CD4-positive, alpha-beta memory T cell (primary cell): ENCODE measurements at regions of chr15 and their contacts with region 1.

Region 1: DNA sequence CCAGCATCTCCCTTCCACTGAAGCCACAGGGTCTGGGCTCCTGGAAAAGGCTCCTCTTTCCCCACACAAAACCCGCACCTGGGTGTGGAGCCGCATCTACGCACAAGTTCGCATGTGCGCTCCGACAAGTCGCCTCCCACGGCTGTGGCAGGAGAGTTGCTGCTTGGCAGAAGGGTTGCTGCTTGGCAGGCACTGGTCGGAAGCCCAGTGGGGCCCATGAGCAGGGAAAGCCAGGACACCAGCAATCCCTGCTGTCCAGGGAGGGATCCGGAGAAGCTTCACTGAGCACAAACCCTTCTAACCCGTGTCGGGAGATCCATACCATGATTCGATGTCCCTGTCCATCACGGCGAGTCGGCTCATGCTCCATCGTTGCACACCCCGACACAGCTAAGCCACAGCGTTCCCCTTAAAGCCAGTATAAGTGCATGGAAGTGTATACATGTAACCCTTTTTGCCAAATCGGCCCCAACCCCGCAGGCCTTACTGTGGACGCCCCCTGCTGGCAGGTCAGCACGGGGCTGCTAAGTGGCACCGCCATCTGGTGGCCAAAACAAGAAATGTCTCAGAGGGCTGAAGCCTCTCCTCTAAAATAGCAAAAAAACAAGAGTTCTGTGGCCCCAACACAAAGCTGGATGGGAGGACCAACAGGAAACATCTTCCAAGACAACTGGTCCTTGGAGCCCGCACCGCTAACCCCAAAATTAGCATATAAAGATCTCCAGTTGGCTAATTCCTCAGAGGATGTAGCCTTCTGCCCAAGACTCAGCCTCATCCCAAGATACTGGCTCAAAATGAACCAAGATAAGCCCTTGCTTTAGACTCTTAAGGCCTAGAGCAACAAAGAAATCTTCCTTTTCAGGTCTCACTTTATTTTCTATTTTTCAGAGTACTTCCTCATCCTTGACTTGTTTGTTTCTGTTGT is 8.3 kb downstream of the ANKRD63 start:
- DNase-seq: peak; percentile 81 to 88 (median 84)
- H3K4me3 ChIP-seq: no peak overlapping the region
- H3K4me3 Mint-ChIP-seq: no peak overlapping the region
- H3K27ac ChIP-seq: no peak overlapping the region
- H3K27ac Mint-ChIP-seq: peak overlapping the region in 3 of 7 donors; percentile 24 to 54 (median 32)
- H3K4me1 ChIP-seq: peaks cover 5% of the 10 kb centered on the region
- H3K4me1 Mint-ChIP-seq: peaks cover 2 to 11% (median 5%) of the 10 kb centered on the region in 4 donors
- H3K27me3 ChIP-seq: no peaks in the 10 kb centered on the region
- H3K27me3 Mint-ChIP-seq: peaks cover 3 to 18% of the 10 kb centered on the region in 2 donors

Region 2: DNA sequence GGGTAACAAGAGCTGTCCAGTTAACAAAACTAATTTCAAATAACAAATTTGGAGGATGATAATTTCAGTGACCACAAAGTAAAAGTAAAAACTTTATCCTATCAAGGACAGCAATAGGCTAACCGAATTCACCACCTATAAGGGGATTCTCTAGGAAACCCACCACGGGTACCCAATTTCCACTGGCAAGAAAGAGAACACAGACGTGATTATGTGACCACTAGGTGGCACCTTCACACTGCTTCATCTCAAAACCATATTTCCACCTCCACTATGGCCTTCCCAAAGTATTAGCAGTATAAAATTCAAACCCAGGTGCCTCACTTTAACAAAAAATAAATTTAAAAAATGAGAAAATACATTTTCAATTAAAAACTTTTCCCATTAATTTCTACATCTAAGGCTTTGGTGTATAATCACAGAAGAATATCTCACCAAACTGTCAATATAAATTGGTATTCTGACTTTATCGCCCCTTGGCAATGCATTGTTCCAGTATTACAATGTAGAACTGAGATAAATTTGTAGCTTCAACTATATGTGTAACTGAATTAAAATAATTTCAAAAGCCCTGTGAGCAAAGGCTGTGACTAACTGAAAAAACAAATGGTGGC is 588.5 kb before region 1 on chr15:
- CTCF ChIA-PET with region 1: no interaction called
- POLR2A ChIA-PET with region 1: no interaction called
- intact Hi-C with region 1: loop called (anchors 1 kb)
- DNase-seq: peak in 4 of 5 donors; percentile 28 to 36 (median 31)
- H3K4me3 ChIP-seq: no peak overlapping the region
- H3K4me3 Mint-ChIP-seq: no peak overlapping the region
- H3K27ac ChIP-seq: no peak overlapping the region
- H3K27ac Mint-ChIP-seq: no peak overlapping the region
- H3K4me1 ChIP-seq: no peaks in the 10 kb centered on the region
- H3K4me1 Mint-ChIP-seq: peaks cover 0 to 15% (median 4%) of the 10 kb centered on the region in 4 donors
- H3K27me3 ChIP-seq: no peaks in the 10 kb centered on the region
- H3K27me3 Mint-ChIP-seq: peaks cover 0 to 1% of the 10 kb centered on the region in 2 donors

Region 3: GRCh38 chr15:40038638-40039543 is 235.7 kb before region 1 on chr15 and contains the start of gene SRP14:
- CTCF ChIA-PET with region 1: interaction called, 42 read pairs
- POLR2A ChIA-PET with region 1: interaction called, 3 read pairs
- intact Hi-C with region 1: no loop called
- DNase-seq: peak; percentile 89 to 95 (median 90)
- H3K4me3 ChIP-seq: peak within 1 kb of the TSS; percentile 42 to 97
- H3K4me3 Mint-ChIP-seq: peak within 1 kb of the TSS; percentile 96 to 100 (median 99)
- H3K27ac ChIP-seq: peak within 1 kb of the TSS; percentile 98
- H3K27ac Mint-ChIP-seq: peak within 1 kb of the TSS; percentile 87 to 99 (median 98)
- H3K4me1 ChIP-seq: peaks cover 24% of the 10 kb centered on the region
- H3K4me1 Mint-ChIP-seq: peaks cover 22 to 49% (median 33%) of the 10 kb centered on the region in 4 donors
- H3K27me3 ChIP-seq: no peaks in the 10 kb centered on the region
- H3K27me3 Mint-ChIP-seq: no peaks in the 10 kb centered on the region
- total RNA-seq, gene SRP14: 118 to 120 TPM

Region 4: GRCh38 chr15:40217159-40217824 is 57.3 kb before region 1 on chr15:
- CTCF ChIA-PET with region 1: interaction called, 331 read pairs
- POLR2A ChIA-PET with region 1: interaction called, 10 read pairs
- intact Hi-C with region 1: loop called (anchors 1 kb)
- DNase-seq: peak; percentile 56 to 74 (median 69)
- H3K4me3 ChIP-seq: no peak overlapping the region
- H3K4me3 Mint-ChIP-seq: no peak overlapping the region
- H3K27ac ChIP-seq: no peak overlapping the region
- H3K27ac Mint-ChIP-seq: no peak overlapping the region
- H3K4me1 ChIP-seq: no peaks in the 10 kb centered on the region
- H3K4me1 Mint-ChIP-seq: no peaks in the 10 kb centered on the region
- H3K27me3 ChIP-seq: no peaks in the 10 kb centered on the region
- H3K27me3 Mint-ChIP-seq: no peaks in the 10 kb centered on the region

Region 5: GRCh38 chr15:40263024-40263754 is 11.4 kb before region 1 on chr15:
- CTCF ChIA-PET with region 1: interaction called, 30 read pairs
- POLR2A ChIA-PET with region 1: no interaction called
- intact Hi-C with region 1: no loop called
- DNase-seq: no peak
- H3K4me3 ChIP-seq: no peak overlapping the region
- H3K4me3 Mint-ChIP-seq: no peak overlapping the region
- H3K27ac ChIP-seq: no peak overlapping the region
- H3K27ac Mint-ChIP-seq: no peak overlapping the region
- H3K4me1 ChIP-seq: no peaks in the 10 kb centered on the region
- H3K4me1 Mint-ChIP-seq: no peaks in the 10 kb centered on the region
- H3K27me3 ChIP-seq: no peaks in the 10 kb centered on the region
- H3K27me3 Mint-ChIP-seq: peaks cover 0 to 2% of the 10 kb centered on the region in 2 donors

Region 6: DNA sequence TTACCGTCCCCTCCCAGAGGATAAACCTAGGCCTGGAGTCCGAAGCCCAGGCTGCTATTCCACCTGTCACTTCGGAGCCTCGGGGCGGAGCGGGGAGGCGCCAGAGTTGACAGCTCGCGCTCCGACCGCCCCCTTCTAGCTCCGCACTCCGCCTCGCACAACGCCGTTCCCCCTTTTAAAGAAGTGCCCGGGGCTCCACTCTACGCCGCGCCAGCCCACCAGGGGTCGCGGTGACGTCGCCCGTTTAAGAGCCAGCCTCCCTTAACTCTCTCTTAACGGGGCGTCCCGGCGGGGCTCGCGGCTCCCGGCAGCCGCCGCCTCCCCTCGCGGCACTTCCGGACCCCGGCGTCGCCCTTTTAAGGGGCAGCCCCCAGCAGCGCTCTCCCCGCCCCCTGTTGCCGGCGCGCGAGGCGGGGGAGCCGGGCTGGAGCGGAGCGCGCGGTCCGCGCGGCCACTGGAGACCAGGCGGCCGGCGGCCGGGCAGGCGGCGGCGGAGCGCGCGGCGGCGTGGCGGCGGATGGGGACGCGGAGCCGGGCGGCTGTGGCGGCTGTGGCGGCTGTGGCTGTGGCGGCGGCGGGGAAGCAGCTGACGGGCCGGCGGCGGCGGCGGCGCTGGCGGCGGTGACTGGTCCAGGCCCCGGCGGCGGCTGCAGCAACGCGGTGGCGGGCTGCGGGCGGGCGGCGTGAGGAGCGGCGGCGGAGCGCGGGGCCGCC is 48.8 kb after region 1 on chr15 and contains the start of gene INAFM2:
- CTCF ChIA-PET with region 1: interaction called, 427 read pairs
- POLR2A ChIA-PET with region 1: no interaction called
- intact Hi-C with region 1: no loop called
- DNase-seq: peak; percentile 88 to 90 (median 89)
- H3K4me3 ChIP-seq: peak within 1 kb of the TSS in 1 of 2 donors; percentile 56
- H3K4me3 Mint-ChIP-seq: peak within 1 kb of the TSS; percentile 79 to 89 (median 86)
- H3K27ac ChIP-seq: peak within 1 kb of the TSS; percentile 29
- H3K27ac Mint-ChIP-seq: peak within 1 kb of the TSS; percentile 36 to 93 (median 88)
- H3K4me1 ChIP-seq: peaks cover 22% of the 10 kb centered on the region
- H3K4me1 Mint-ChIP-seq: peaks cover 16 to 35% (median 25%) of the 10 kb centered on the region in 4 donors
- H3K27me3 ChIP-seq: no peaks in the 10 kb centered on the region
- H3K27me3 Mint-ChIP-seq: peaks cover 0 to 7% of the 10 kb centered on the region in 2 donors
- total RNA-seq, gene INAFM2: 7.2 to 7.5 TPM

Region 7: DNA sequence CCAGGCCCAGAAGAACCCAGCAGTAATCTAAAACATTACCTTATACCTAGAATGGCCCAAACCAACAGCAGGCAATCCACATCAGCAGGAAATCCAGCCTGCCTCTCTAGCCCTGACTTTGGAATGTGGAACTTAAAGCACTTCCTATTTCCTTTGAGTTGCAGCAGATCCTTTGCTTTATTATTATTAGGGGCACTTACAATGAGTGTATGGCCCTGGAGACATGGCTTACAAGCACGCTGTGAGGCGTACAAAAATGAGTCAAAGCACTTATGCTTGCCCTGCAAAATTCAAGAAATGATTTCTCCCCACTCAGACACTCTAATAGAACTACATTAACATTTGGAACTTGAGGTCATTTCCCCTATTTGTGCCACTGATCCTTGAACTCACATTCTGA is 98.4 kb after region 1 on chr15:
- CTCF ChIA-PET with region 1: no interaction called
- POLR2A ChIA-PET with region 1: no interaction called
- intact Hi-C with region 1: no loop called
- DNase-seq: no peak
- H3K4me3 ChIP-seq: no peak overlapping the region
- H3K4me3 Mint-ChIP-seq: no peak overlapping the region
- H3K27ac ChIP-seq: no peak overlapping the region
- H3K27ac Mint-ChIP-seq: no peak overlapping the region
- H3K4me1 ChIP-seq: peaks cover 3% of the 10 kb centered on the region
- H3K4me1 Mint-ChIP-seq: peaks cover 0 to 7% (median 2%) of the 10 kb centered on the region in 4 donors
- H3K27me3 ChIP-seq: no peaks in the 10 kb centered on the region
- H3K27me3 Mint-ChIP-seq: no peaks in the 10 kb centered on the region

Region 8: DNA sequence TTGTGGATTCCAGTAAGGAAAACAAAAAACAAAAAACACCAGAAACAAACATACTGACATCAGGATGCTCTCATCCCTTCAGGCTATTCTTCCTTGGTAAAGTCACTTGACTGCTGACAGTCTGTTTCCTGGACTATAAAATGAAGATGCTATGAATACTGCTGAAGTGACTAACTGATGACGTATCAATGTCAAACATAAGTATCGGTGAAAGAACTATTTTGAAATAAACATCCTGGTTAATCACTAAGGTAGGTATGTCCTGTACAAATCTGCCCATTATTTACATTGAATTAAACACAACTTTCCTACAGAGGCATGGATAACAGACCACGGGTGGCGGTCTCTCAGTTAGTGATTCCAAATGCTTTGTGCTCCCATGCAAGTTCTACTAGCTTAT is 724.6 kb after region 1 on chr15:
- CTCF ChIA-PET with region 1: no interaction called
- POLR2A ChIA-PET with region 1: no interaction called
- intact Hi-C with region 1: no loop called
- DNase-seq: no peak
- H3K4me3 ChIP-seq: no peak overlapping the region
- H3K4me3 Mint-ChIP-seq: no peak overlapping the region
- H3K27ac ChIP-seq: no peak overlapping the region
- H3K27ac Mint-ChIP-seq: no peak overlapping the region
- H3K4me1 ChIP-seq: no peaks in the 10 kb centered on the region
- H3K4me1 Mint-ChIP-seq: no peaks in the 10 kb centered on the region
- H3K27me3 ChIP-seq: no peaks in the 10 kb centered on the region
- H3K27me3 Mint-ChIP-seq: no peaks in the 10 kb centered on the region